Caco-2 (cell line): ENCODE measurements at regions of chr4 and their contacts with region 1.

Region 1: GRCh38 chr4:5409972-5410618 is 298.3 kb downstream of the EVC2 start:
- DNase-seq: no peak
- H3K4me3 ChIP-seq: no peak overlapping the region
- H3K4me3 Mint-ChIP-seq: no peak overlapping the region
- H3K27ac Mint-ChIP-seq: no peak overlapping the region
- H3K4me1 ChIP-seq: no peaks in the 10 kb centered on the region
- H3K4me1 Mint-ChIP-seq: no peaks in the 10 kb centered on the region
- H3K27me3 ChIP-seq: no peaks in the 10 kb centered on the region
- H3K27me3 Mint-ChIP-seq: peaks cover 3% of the 10 kb centered on the region
- CTCF ChIP-seq: no peak

Region 2: DNA sequence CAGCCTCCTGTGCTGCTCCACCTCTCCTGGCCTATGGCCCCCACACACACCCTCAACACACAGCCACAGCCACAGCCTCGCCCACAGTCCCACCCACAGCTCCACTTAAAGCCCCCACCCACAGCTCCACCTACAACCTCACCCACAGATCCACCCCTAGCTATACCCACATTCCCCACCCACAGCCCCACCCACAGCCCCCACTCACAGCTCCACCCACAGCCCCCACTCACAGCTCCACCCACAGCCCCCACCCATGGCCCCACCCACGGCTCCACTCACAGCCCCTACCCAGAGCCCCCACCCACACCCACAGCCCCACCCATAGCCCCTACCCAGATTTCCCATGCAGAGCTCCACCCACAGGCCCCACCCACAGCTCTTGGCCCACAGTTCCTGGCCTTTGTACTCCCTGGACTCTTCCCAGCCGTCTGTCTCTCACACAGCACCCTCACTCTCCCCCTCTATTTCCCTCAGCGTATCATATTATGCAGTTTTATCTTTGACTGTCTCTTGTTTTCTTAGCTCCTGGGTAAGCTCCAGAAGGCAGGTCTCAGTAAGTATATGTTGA is 24.3 kb before region 1 on chr4:
- CTCF ChIA-PET with region 1: no interaction called
- POLR2A ChIA-PET with region 1: no interaction called
- intact Hi-C with region 1: no loop called
- DNase-seq: peak; percentile 9 to 54
- H3K4me3 ChIP-seq: no peak overlapping the region
- H3K4me3 Mint-ChIP-seq: no peak overlapping the region
- H3K27ac Mint-ChIP-seq: no peak overlapping the region
- H3K4me1 ChIP-seq: no peaks in the 10 kb centered on the region
- H3K4me1 Mint-ChIP-seq: no peaks in the 10 kb centered on the region
- H3K27me3 ChIP-seq: no peaks in the 10 kb centered on the region
- H3K27me3 Mint-ChIP-seq: no peaks in the 10 kb centered on the region
- CTCF ChIP-seq: no peak

Region 3: DNA sequence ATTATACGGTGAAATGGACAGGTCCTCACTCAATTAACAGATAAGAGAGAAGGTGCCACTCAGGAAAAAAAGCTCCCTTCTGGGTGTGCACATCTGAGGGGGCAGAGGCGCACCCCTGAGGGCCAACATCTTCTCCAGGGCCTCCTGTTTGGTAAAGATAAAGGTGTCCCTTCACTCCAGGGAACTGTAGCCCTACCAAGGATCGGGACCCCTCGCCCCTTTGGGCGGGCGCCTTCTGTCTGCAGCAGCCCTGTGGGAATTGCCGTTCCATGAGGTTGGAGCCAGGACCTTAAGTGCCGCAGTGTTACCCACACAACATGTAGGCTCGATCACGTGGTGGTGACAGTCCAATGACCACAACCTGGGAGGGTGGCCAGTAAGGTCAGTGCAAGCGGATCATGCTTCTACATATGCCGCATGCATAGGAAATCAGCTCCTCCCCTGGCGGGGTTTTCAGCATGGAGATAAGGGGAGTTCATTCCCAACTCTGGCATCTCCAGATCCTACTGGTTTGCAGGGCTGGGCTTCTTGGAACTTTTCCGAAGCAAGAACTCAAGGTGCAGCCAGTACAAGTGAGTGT is 45.0 kb after region 1 on chr4:
- CTCF ChIA-PET with region 1: no interaction called
- POLR2A ChIA-PET with region 1: no interaction called
- intact Hi-C with region 1: loop called (anchors 2 kb)
- DNase-seq: no peak
- H3K4me3 ChIP-seq: no peak overlapping the region
- H3K4me3 Mint-ChIP-seq: no peak overlapping the region
- H3K27ac Mint-ChIP-seq: no peak overlapping the region
- H3K4me1 ChIP-seq: no peaks in the 10 kb centered on the region
- H3K4me1 Mint-ChIP-seq: no peaks in the 10 kb centered on the region
- H3K27me3 ChIP-seq: no peaks in the 10 kb centered on the region
- H3K27me3 Mint-ChIP-seq: no peaks in the 10 kb centered on the region
- CTCF ChIP-seq: no peak

Region 4: GRCh38 chr4:5798462-5798861 is 388.4 kb after region 1 on chr4:
- CTCF ChIA-PET with region 1: no interaction called
- POLR2A ChIA-PET with region 1: no interaction called
- intact Hi-C with region 1: no loop called
- DNase-seq: no peak
- H3K4me3 ChIP-seq: no peak overlapping the region
- H3K4me3 Mint-ChIP-seq: no peak overlapping the region
- H3K27ac Mint-ChIP-seq: no peak overlapping the region
- H3K4me1 ChIP-seq: no peaks in the 10 kb centered on the region
- H3K4me1 Mint-ChIP-seq: no peaks in the 10 kb centered on the region
- H3K27me3 ChIP-seq: no peaks in the 10 kb centered on the region
- H3K27me3 Mint-ChIP-seq: peaks cover 3% of the 10 kb centered on the region
- CTCF ChIP-seq: no peak